ENCODE measurements at regions of chr10 and their contacts with region 1.

Region 1: DNA sequence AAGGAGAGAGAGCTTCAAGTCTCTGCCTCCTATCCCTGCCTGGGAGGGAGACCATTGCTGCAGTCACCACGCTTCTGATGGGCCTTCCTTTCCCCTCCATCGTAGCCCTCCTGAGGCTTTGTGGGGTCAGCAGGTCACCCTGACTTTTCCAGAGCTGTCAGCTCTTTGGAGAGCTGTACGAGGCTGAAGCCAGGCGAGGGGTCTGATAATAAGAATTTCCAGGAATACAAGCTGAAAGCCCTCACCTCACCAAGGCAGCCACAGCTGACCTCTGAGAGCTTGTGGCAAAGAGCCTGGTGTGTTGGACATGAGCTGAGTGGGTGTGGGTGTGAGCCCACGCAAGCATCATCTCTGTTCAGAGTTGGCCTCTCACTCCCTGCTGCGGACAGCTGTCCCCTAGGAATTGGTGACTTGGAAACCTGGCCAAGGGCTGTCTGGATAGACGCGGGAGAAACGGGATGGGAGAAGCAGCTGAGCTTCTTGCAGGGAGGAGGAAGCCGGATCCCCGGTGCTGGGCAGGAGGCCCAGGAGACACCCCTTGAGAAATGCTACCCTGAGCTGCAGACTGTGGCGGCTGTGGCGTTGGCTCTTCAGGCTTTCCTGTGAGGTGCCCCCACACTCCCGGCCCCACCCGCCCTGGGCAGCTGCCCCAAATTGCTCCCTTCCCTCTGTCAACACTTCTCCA is 122.1 kb upstream of the BTBD16 start:
- DNase-seq: peak; percentile 22
- H3K4me3 ChIP-seq: no peak overlapping the region
- H3K27ac ChIP-seq: peak overlapping the region; percentile 91
- H3K4me1 ChIP-seq: peaks cover 22% of the 10 kb centered on the region
- H3K27me3 ChIP-seq: no peaks in the 10 kb centered on the region
- CTCF ChIP-seq: no peak
- POLR2A ChIP-seq: no peak

Region 2: GRCh38 chr10:122163174-122164022 is 14.4 kb after region 1 on chr10:
- CTCF ChIA-PET with region 1: interaction called, 8 read pairs
- POLR2A ChIA-PET with region 1: no interaction called
- dilution Hi-C with region 1: no loop called
- intact Hi-C with region 1: loop called (anchors 1 kb)
- DNase-seq: peak; percentile 49
- H3K4me3 ChIP-seq: peak overlapping the region; percentile 22 to 57 (median 43)
- H3K27ac ChIP-seq: no peak overlapping the region
- H3K4me1 ChIP-seq: peaks cover 8% of the 10 kb centered on the region
- H3K27me3 ChIP-seq: no peaks in the 10 kb centered on the region
- CTCF ChIP-seq: no peak
- POLR2A ChIP-seq: no peak

Region 3: DNA sequence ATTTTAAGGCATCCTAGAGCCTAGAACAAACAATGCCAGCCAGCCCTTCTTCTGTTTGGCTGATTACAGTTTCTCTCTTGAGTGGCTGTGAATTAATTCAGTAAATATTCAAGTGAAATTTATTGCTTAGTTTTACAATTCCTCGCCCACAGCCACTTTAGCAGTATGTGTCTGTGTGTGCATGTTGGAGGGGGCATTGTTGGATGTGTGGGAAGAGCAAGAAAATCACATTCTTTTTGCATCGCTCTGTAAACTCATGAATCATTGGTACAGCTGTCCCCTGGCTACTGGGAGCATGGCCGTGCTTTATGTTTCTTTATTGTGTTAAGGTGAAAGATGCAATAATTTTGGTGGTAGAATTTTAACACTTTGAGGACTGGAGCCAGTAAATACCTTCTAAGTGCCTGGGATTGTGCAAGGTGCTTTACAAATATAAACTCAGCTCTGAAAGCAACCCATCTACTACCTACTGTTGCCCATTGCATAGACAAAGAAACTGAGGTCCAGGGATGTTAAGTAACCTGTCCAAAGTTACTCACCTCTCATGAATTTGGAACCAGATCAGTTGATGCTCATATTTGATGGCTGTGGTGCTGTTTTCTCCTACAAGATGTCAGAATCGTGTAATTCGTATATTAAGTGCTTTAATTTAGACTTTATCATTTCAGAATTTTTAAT is 32.2 kb after region 1 on chr10:
- CTCF ChIA-PET with region 1: interaction called, 3 read pairs
- POLR2A ChIA-PET with region 1: no interaction called
- dilution Hi-C with region 1: no loop called
- intact Hi-C with region 1: loop called (anchors 1 kb)
- DNase-seq: peak; percentile 21
- H3K4me3 ChIP-seq: no peak overlapping the region
- H3K27ac ChIP-seq: no peak overlapping the region
- H3K4me1 ChIP-seq: peaks cover 28% of the 10 kb centered on the region
- H3K27me3 ChIP-seq: no peaks in the 10 kb centered on the region
- CTCF ChIP-seq: no peak
- POLR2A ChIP-seq: no peak

Region 4: GRCh38 chr10:122207596-122207995 is 58.6 kb after region 1 on chr10:
- CTCF ChIA-PET with region 1: no interaction called
- POLR2A ChIA-PET with region 1: no interaction called
- dilution Hi-C with region 1: no loop called
- intact Hi-C with region 1: loop called (anchors 2 kb)
- DNase-seq: no peak
- H3K4me3 ChIP-seq: no peak overlapping the region
- H3K27ac ChIP-seq: no peak overlapping the region
- H3K4me1 ChIP-seq: peaks cover 3% of the 10 kb centered on the region
- H3K27me3 ChIP-seq: no peaks in the 10 kb centered on the region
- CTCF ChIP-seq: no peak
- POLR2A ChIP-seq: no peak

Measured in endothelial cell of umbilical vein (primary cell).